ENCODE measurements at regions of chr1 and their contacts with region 1.

Region 1: GRCh38 chr1:15196807-15197530 is 43.4 kb downstream of the TMEM51 start:
- DNase-seq: peak in 1 of 2 donors; percentile 2
- H3K4me3 ChIP-seq: no peak overlapping the region
- H3K27ac ChIP-seq: no peak overlapping the region
- H3K4me1 ChIP-seq: no peaks in the 10 kb centered on the region
- H3K27me3 ChIP-seq: no peaks in the 10 kb centered on the region
- CTCF ChIP-seq: no peak
- POLR2A ChIP-seq: no peak

Region 2: DNA sequence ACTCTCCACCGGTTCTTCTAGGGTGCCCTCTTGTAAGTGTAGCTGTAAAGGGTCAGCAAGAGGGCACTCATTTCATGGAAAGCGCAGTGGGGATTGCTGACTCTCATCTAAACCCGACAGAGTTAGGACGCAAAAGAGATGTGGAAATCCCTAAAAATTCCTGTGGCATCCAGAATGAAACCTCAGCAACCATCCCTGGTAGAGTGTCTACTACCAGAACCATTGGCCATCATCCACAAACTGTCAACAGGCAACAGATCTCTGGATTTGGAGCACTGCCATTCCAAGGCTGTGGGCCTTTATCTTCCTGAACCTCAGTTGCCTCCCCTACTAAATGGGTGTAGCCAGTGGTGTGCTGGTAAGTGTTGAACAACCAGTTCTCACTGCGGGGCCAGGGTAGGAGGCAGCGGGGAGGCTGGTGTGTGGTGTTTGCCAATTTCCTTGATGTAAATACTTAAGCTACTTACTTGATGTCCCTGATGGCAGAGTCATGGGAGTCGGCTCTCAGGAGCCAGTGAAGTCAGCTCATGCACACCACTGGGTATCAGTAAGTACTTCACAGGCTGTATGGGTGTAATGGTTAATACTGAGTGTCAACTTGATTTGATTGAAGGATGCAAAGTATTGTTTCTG is 402.7 kb before region 1 on chr1:
- intact Hi-C with region 1: loop called (anchors 10 kb)
- DNase-seq: no peak
- H3K4me3 ChIP-seq: no peak overlapping the region
- H3K27ac ChIP-seq: no peak overlapping the region
- H3K4me1 ChIP-seq: no peaks in the 10 kb centered on the region
- H3K27me3 ChIP-seq: no peaks in the 10 kb centered on the region
- CTCF ChIP-seq: no peak
- POLR2A ChIP-seq: no peak

Region 3: GRCh38 chr1:15155888-15156741 is 40.9 kb before region 1 on chr1:
- intact Hi-C with region 1: no loop called
- DNase-seq: no peak
- H3K4me3 ChIP-seq: no peak overlapping the region
- H3K27ac ChIP-seq: peak overlapping the region; percentile 22 to 46
- H3K4me1 ChIP-seq: no peaks in the 10 kb centered on the region
- H3K27me3 ChIP-seq: no peaks in the 10 kb centered on the region
- CTCF ChIP-seq: no peak
- POLR2A ChIP-seq: no peak

Region 4: GRCh38 chr1:16904560-16905111 is 1707.7 kb after region 1 on chr1:
- intact Hi-C with region 1: no loop called
- DNase-seq: peak; percentile 99 to 100
- H3K4me3 ChIP-seq: peak overlapping the region; percentile 42 to 75 (median 64)
- H3K27ac ChIP-seq: peak overlapping the region; percentile 96 to 99
- H3K4me1 ChIP-seq: no peaks in the 10 kb centered on the region
- H3K27me3 ChIP-seq: no peaks in the 10 kb centered on the region
- CTCF ChIP-seq: no peak
- POLR2A ChIP-seq: peak; percentile 13